Naive thymus-derived CD4-positive, alpha-beta T cell (primary cell): ENCODE measurements at regions of chr20 and their contacts with region 1.

Region 1: DNA sequence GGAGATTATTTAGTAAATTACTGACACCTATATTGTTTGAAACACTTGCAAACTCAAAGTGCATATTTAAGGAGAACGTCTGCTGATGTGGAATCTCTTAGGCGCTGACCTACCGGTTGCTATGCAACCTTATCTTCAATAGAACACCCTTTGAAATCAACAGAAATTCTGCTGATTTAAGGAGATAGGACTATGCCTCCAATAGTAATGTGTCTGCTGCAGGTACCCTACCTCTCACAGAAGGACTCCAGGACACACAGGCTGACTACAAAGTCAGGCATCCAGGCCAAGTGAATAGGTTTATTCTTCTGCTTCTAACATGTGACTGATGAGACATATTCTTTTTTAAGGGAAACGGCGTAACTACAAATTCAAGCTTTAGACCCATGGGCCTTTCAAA is 311.7 kb downstream of the CBLN4 start:
- DNase-seq: no peak
- ATAC-seq: no peak
- H3K4me3 ChIP-seq: no peak overlapping the region
- H3K4me3 Mint-ChIP-seq: no peak overlapping the region
- H3K27ac ChIP-seq: no peak overlapping the region
- H3K27ac Mint-ChIP-seq: no peak overlapping the region
- H3K4me1 ChIP-seq: no peaks in the 10 kb centered on the region
- H3K4me1 Mint-ChIP-seq: no peaks in the 10 kb centered on the region
- H3K27me3 ChIP-seq: no peaks in the 10 kb centered on the region
- H3K27me3 Mint-ChIP-seq: no peaks in the 10 kb centered on the region

Region 2: DNA sequence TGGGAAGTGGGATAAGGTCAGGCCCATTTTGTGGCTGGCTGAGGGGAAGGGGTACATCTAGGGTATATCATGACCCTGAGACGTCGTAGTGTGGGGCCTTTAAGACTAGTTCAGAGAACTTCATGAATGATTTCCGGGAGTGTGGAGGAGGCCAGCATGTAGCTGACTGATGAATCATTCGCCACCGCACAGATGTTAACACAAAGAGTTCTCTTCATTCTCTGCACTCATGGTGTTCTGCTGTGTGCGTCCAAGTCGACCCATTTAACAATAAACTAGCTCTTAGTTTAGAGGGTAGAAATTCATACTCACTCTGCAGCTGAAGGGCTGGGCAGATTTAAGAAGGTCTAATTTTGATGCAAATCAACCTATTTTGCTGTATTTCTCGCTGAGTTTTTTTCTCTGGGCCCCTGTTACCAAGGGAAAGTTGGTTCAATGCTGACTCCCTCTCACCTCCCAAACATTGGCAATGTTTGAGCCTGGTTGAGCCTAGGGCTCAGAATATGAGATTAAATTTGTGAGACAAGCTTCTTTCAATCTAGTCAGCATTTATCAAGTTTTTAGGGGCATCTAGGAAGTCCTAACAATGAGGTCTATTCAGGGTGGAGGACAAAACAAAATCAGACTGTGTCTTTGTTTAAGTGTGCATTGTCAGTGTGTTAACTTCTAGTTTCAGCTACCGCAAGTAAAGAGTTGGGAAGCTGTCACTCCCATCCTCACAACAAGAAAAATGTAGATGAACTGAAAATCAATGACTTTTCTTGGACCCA is 418.5 kb after region 1 on chr20:
- CTCF ChIA-PET with region 1: no interaction called
- POLR2A ChIA-PET with region 1: no interaction called
- intact Hi-C with region 1: loop called in 1 of 2 experiments (anchors 10 kb)
- DNase-seq: no peak
- ATAC-seq: no peak
- H3K4me3 ChIP-seq: no peak overlapping the region
- H3K4me3 Mint-ChIP-seq: no peak overlapping the region
- H3K27ac ChIP-seq: no peak overlapping the region
- H3K27ac Mint-ChIP-seq: no peak overlapping the region
- H3K4me1 ChIP-seq: no peaks in the 10 kb centered on the region
- H3K4me1 Mint-ChIP-seq: no peaks in the 10 kb centered on the region
- H3K27me3 ChIP-seq: no peaks in the 10 kb centered on the region
- H3K27me3 Mint-ChIP-seq: peaks cover 0 to 6% (median 0%) of the 10 kb centered on the region in 5 donors